Adrenal gland (tissue), 19 donors: ENCODE measurements at regions of chr7 and their contacts with region 1.

Region 1: DNA sequence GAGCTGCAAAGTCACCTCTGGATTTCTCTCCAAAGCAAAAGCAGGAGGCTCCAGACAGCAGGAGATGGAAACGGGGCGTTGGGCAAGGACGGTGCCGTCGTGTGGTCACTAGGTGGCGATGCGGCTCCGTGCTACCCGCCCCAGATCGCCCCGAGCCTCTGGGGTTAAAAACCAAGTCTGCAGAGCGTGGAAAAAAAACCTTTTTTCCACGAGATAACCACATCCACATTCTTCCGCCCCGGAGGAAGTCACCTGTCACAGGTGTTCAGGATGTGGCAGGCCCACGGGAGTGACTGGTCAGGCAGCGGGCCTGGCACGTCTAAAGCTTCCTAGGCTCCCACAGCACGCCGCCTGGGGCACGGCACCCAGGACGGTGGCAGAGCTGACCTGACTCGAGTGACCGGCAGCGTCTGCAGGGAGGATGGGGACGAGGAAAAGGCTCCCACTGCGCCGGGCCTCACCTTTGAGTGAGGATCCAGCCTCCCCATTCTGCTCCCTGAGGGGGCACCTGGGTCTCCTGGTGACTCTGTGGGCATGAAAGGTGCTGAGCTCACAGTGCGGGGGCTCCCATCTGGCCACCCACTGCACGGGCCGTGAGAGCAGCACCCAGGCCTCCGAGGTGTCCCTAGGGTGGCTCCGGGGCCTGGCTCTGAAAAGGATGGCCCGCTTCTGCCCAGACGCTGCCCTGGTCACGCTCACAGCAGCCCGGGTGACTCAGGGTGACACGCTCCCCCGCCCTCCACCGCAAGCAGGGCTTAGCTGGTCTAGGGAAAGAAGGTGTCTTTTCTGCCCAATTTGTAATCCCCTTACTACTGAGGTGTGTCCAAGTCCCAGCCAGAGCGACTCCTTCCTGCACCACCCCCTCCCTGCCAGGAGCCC is 71.3 kb upstream of the TNRC18 start:
- DNase-seq: peak; percentile 73 to 89 (median 86)
- H3K4me3 ChIP-seq: peak overlapping the region in 1 of 4 donors; percentile 31
- H3K27ac ChIP-seq: peak overlapping the region; percentile 16 to 92 (median 84)
- H3K4me1 ChIP-seq: peaks cover 9 to 22% of the 10 kb centered on the region in 2 donors
- H3K27me3 ChIP-seq: no peaks in the 10 kb centered on the region
- CTCF ChIP-seq: peak; percentile 89 to 96 (median 93)
- POLR2A ChIP-seq: no peak

Region 2: GRCh38 chr7:5557920-5558401 is 63.0 kb after region 1 on chr7:
- intact Hi-C with region 1: loop called in 1 of 2 experiments (anchors 2 kb)
- DNase-seq: peak; percentile 68 to 94 (median 81)
- H3K4me3 ChIP-seq: no peak overlapping the region
- H3K27ac ChIP-seq: peak overlapping the region; percentile 90 to 99 (median 98)
- H3K4me1 ChIP-seq: peaks cover 40 to 48% of the 10 kb centered on the region in 2 donors
- H3K27me3 ChIP-seq: no peaks in the 10 kb centered on the region
- CTCF ChIP-seq: no peak
- POLR2A ChIP-seq: peak in 1 of 2 donors; percentile 39

Region 3: DNA sequence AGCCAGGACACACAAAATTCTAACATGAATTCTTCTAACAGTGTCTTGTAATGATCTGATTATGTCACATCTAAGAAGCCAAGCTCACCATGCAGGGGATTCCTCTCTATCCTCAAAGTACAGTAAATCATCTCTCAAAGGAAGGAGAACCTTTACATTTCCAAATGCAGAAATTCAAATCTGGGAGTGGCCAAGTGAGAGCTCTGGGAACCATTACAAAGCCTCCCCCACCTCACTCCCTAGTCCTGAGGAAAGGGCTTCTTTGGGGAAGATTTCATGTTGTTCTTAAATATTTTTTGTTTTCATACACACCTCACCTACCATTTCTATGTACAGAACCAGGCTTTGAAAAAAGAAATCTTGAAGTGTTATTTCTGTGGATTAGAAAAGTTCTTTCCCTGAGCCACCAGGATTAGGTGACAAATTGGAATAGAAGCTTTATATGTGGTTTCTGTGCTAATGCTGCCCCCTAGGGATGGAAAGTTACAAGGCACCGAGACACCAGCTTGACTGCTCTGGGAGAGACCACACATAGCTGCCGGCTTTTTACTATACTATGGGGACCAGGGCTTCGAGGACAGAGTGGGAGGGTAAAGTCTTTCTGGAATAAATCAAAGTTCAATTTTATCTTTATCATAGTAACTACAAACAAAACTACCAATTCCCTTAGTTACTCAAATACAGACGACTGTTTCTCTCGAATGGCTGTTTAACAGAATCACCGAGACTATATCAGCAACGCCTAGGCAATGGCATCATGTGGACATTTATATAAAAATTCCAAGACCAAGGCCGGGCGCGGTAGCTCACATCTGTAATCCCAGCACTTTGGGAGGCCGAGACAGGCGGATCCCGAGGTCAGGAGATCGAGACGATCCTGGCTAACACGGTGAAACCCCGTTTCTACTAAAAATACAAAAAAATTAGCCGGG is 170.4 kb after region 1 on chr7:
- intact Hi-C with region 1: loop called (anchors 5 kb)
- DNase-seq: peak; percentile 67 to 91 (median 79)
- H3K4me3 ChIP-seq: no peak overlapping the region
- H3K27ac ChIP-seq: no peak overlapping the region
- H3K4me1 ChIP-seq: peaks cover 0 to 12% of the 10 kb centered on the region in 2 donors
- H3K27me3 ChIP-seq: no peaks in the 10 kb centered on the region
- CTCF ChIP-seq: peak; percentile 71 to 92 (median 90)
- POLR2A ChIP-seq: no peak

Region 4: DNA sequence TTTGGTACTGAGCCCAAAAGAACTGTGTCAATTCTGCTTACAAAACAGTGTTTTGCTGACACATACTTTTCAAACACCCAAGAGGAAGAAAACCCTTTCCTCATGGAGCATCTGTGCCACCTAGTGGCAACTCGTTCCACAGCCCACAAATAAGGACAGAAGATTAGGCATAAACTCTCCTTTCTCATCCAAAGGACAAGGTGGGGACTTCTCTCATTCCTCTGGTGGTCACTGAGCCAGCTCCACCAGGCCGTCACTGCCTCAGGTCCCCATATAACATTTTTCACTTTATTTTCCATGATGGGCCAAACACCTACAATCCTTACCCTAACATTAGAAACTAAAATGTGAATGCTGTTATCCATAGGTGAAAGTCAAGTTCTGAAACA is 209.6 kb after region 1 on chr7:
- intact Hi-C with region 1: loop called in 1 of 2 experiments (anchors 2 kb)
- DNase-seq: peak; percentile 75 to 95 (median 80)
- H3K4me3 ChIP-seq: no peak overlapping the region
- H3K27ac ChIP-seq: peak overlapping the region in 2 of 5 donors; percentile 18 to 54
- H3K4me1 ChIP-seq: peaks cover 19 to 41% of the 10 kb centered on the region in 2 donors
- H3K27me3 ChIP-seq: no peaks in the 10 kb centered on the region
- CTCF ChIP-seq: peak; percentile 83 to 97 (median 96)
- POLR2A ChIP-seq: no peak